Activated T-helper 1 cell treated with anti-CD3 and anti-CD28 coated beads, Interleukin-12 subunit alpha, Interleukin-12 subunit beta, Interleukin-2, Interleukin-4 antibody, amounts not matched to agents 30 ng/mL and 10 ng/mL and 1 ng/mL, durations not matched to agents 14 hours and 24 hours and 36 hours (primary cell): ENCODE measurements at regions of chr16 and their contacts with region 1.

Region 1: DNA sequence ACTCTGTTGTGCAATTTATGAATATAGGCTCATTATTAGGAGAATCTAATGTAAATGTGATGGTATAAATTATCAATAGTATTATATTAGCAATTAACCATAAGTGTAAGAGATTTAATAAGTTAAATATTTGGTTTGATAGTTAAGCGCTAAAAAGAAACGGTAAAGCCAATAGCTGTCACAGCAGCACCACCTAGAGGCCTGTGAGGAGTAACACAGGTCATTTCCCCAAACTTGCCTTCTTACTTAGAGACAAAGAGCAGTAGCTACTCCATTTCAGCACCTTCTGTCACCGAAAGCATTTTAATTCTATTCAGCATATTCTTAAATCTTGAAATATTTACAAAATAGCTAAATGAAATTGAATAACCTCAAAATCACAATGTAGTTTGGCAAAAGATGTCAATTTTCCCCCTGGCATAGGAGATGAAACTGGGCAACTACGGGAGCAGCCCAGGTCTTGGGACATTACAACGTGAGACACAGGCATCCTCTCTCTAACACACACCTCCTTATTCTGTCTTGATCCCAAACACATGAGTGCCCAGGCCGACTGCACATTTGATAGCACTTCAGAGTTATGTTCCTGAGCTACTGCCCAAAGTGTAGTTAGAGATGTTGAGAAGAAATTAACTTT is 14.2 kb upstream of the DYNLRB2 start:
- DNase-seq: peak; percentile 35
- H3K4me3 Mint-ChIP-seq: no peak overlapping the region
- H3K27ac Mint-ChIP-seq: no peak overlapping the region
- H3K4me1 Mint-ChIP-seq: peaks cover 20% of the 10 kb centered on the region
- H3K27me3 Mint-ChIP-seq: no peaks in the 10 kb centered on the region

Region 2: GRCh38 chr16:78705694-78706093 is 1820.8 kb before region 1 on chr16:
- intact Hi-C with region 1: loop called (anchors 5 kb)
- DNase-seq: peak; percentile 2
- H3K4me3 Mint-ChIP-seq: no peak overlapping the region
- H3K27ac Mint-ChIP-seq: no peak overlapping the region
- H3K4me1 Mint-ChIP-seq: peaks cover 14% of the 10 kb centered on the region
- H3K27me3 Mint-ChIP-seq: peaks cover 2% of the 10 kb centered on the region

Region 3: DNA sequence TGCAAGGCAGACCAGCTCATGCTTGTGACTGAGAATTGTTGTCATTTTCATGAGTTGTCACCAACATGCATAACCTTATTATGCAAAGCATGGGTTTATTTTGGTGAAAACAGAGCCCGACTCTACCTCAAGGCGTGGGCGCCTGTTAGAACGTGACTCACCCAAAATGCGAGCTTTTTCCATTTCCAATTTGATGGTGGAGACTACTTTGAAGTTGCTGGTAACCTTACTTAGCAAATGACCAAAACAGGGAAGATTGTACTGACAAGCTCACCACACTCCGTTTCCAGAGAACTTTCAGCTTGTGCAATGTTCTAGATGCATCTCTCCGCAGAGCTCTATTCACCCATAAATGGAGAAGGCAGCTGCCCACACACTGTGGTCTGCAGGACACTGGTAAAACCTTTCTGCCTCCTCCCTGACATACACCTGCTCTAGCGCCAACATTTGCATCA is 1210.5 kb before region 1 on chr16:
- intact Hi-C with region 1: loop called (anchors 1 kb)
- DNase-seq: peak; percentile 54
- H3K4me3 Mint-ChIP-seq: peak overlapping the region; percentile 64
- H3K27ac Mint-ChIP-seq: peak overlapping the region; percentile 90
- H3K4me1 Mint-ChIP-seq: peaks cover 29% of the 10 kb centered on the region
- H3K27me3 Mint-ChIP-seq: peaks cover 10% of the 10 kb centered on the region

Region 4: DNA sequence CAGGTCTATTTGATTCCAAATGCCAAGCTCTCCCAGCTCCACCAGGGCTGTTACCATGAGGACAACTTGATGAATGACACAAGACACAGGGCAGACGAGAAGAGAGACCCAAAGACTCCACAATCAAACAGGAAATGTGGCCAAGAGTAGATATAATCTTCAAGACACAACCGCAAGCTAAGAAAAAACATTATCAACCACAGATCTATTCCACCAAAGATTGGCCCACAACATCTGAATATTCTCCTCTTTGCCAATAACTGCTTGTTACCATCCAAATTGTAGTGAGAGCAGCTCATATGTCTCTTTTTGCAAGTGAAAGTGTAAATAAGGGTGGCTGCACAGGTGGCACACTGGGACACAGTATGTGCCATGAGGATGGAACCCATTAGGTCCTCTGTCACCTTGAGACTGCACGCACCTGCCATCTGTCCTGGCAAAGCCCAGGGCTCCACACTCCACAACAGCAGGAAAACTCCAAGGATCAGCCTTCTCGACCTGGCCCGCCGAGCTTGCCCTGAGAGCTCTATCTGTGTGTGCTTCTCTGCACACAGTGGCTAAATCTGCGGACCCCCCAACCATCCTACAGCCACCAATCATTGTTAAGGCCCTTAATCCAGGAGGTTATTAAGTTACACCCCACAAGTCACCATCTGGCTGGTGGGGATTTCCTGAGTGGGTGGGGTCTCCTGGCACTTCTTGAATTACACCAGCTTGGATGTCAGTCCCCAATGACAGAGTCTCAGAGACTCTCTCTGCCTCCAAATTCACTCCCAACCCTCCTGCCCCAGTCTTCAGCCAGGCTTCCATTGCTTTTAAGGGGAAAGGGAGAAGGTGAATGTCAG is 64.8 kb after region 1 on chr16:
- intact Hi-C with region 1: loop called (anchors 2 kb)
- DNase-seq: peak; percentile 53
- H3K4me3 Mint-ChIP-seq: peak overlapping the region; percentile 17
- H3K27ac Mint-ChIP-seq: peak overlapping the region; percentile 76
- H3K4me1 Mint-ChIP-seq: peaks cover 66% of the 10 kb centered on the region
- H3K27me3 Mint-ChIP-seq: no peaks in the 10 kb centered on the region

Region 5: GRCh38 chr16:80693553-80693952 is 167.0 kb after region 1 on chr16:
- intact Hi-C with region 1: loop called (anchors 2 kb)
- DNase-seq: no peak
- H3K4me3 Mint-ChIP-seq: no peak overlapping the region
- H3K27ac Mint-ChIP-seq: peak overlapping the region; percentile 71
- H3K4me1 Mint-ChIP-seq: peaks cover 83% of the 10 kb centered on the region
- H3K27me3 Mint-ChIP-seq: peaks cover 1% of the 10 kb centered on the region

Region 6: DNA sequence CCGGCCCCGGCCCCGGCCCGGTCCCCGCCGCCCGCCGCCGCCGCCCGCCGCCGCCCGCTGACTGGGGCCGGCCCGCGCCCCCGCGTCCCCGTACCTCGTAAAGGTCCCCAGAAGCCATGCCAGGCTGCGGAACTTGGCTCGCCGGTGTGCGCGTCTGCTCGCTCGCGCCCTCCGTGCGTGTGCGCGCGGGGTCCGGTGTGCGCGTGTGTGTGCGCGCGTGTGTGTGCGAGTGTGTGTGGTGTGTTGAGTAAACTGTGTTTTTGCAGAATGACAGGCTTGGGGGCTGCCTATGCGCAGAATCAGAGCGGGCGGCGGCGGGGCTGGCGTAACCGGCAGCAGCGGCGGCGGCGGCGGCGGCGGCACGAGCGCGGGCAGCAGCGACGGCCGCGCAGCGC is 277.5 kb after region 1 on chr16:
- intact Hi-C with region 1: loop called (anchors 5 kb)
- DNase-seq: peak; percentile 56
- H3K4me3 Mint-ChIP-seq: peak overlapping the region; percentile 95
- H3K27ac Mint-ChIP-seq: peak overlapping the region; percentile 98
- H3K4me1 Mint-ChIP-seq: peaks cover 57% of the 10 kb centered on the region
- H3K27me3 Mint-ChIP-seq: no peaks in the 10 kb centered on the region

Region 7: DNA sequence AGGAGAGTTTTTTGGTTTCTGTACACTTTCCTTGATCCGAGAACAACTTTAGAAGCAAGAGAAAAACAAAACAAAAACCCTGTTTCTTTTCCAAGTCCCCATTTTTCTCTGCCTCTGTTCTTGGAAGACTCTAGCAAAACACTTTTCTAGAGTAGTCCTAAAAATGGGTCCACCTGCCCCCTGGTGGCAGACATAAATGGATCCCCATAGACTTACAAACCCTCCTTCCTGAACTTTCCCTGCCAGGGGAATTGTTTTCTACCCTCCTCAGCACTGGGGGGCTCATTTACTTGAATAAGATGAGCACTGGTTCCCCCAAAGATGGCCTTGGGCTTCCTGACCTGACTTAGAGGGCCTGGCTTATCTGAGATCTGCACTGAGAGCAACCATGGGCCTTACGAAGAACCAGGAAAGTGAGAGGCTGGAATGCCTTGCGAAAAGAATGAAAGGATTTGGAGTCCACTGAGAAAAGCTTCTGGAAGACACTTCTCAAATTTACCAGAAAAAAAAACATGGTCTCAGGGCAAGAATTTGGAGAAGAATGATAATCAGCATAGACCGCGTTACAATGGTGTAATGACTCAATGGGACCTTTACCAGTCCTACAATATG is 325.8 kb after region 1 on chr16:
- intact Hi-C with region 1: loop called (anchors 1 kb)
- DNase-seq: no peak
- H3K4me3 Mint-ChIP-seq: no peak overlapping the region
- H3K27ac Mint-ChIP-seq: no peak overlapping the region
- H3K4me1 Mint-ChIP-seq: no peaks in the 10 kb centered on the region
- H3K27me3 Mint-ChIP-seq: peaks cover 1% of the 10 kb centered on the region